RWPE1 (cell line): ENCODE measurements at regions of chr1 and their contacts with region 1.

Region 1: GRCh38 chr1:32964461-32965250 is at the start of gene RNF19B:
- DNase-seq: peak; percentile 97
- H3K27ac ChIP-seq: peak within 1 kb of the TSS; percentile 92
- CTCF ChIP-seq: no peak

Region 2: DNA sequence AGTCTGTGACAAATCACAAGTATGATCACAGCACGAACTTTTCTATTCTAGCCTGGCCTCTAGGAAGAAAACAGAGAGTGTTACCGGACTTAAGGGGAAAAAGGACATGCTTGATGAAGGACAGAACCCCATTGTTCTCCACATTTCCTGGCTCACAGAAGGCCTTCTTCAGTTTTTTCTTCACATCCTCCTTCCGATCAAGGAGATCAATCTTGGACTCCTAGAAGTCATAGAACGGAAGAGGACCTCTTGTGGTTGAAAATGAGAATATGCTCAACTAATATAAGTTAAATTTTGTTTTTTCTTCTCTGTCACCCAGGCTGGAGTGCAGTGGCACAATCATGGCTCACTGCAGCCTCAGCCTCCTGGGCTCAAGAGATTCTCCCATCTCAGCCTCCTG is 177.8 kb before region 1 on chr1:
- CTCF ChIA-PET with region 1: no interaction called
- POLR2A ChIA-PET with region 1: no interaction called
- DNase-seq: no peak
- H3K27ac ChIP-seq: peak overlapping the region; percentile 57
- CTCF ChIP-seq: no peak

Region 3: GRCh38 chr1:32953495-32953894 is 11.2 kb before region 1 on chr1:
- CTCF ChIA-PET with region 1: interaction called, 3 read pairs
- POLR2A ChIA-PET with region 1: interaction called, 11 read pairs
- DNase-seq: peak; percentile 71
- H3K27ac ChIP-seq: peak overlapping the region; percentile 87
- CTCF ChIP-seq: no peak

Region 4: GRCh38 chr1:34250342-34250741 is 1285.7 kb after region 1 on chr1:
- CTCF ChIA-PET with region 1: no interaction called
- POLR2A ChIA-PET with region 1: no interaction called
- DNase-seq: no peak
- H3K27ac ChIP-seq: no peak overlapping the region
- CTCF ChIP-seq: no peak